CD4-positive, alpha-beta memory T cell (primary cell): ENCODE measurements at regions of chr1 and their contacts with region 1.

Region 1: GRCh38 chr1:23108918-23109533 is 59.6 kb downstream of the LUZP1 start:
- DNase-seq: peak in 1 of 5 donors; percentile 66
- H3K4me3 ChIP-seq: no peak overlapping the region
- H3K4me3 Mint-ChIP-seq: peak overlapping the region in 5 of 8 donors; percentile 2 to 74 (median 31)
- H3K27ac ChIP-seq: no peak overlapping the region
- H3K27ac Mint-ChIP-seq: peak overlapping the region in 6 of 7 donors; percentile 6 to 88 (median 62)
- H3K4me1 ChIP-seq: peaks cover 55% of the 10 kb centered on the region
- H3K4me1 Mint-ChIP-seq: peaks cover 38 to 73% (median 45%) of the 10 kb centered on the region in 4 donors
- H3K27me3 ChIP-seq: no peaks in the 10 kb centered on the region
- H3K27me3 Mint-ChIP-seq: no peaks in the 10 kb centered on the region

Region 2: DNA sequence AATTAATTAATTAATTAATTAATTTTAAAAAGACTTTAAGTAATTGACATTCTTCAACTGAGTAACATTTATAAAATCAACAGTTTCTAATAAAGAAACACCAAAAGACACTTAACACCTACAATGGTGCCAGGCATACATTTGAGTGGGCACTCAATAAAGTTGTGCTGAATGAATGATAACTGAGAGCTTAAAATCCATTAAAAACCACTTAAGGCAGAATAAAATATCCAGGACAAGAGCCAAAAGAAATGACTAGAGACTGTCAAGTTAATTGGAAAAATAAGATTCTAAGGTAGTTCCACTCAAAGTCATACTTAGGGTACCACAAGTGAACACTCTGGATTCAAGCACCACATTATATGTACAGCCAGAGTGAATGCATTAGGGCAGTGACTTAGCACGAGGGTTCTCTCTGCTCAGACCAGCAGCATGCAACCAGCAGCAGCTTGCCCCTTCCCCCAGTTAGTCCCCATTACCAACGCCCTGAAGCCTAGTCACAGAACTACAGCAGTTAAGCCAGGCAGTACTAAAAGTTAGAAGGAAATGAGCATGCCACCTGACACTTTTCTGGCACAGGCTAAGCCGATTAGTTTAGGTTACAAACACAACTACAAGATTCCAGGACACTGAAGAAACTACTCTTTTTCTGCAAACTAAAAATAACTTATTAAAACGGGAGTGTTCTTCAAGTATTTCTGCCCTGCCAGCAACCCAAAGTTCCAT is 13.2 kb after region 1 on chr1:
- CTCF ChIA-PET with region 1: interaction called, 15 read pairs
- POLR2A ChIA-PET with region 1: interaction called, 49 read pairs
- intact Hi-C with region 1: no loop called
- DNase-seq: no peak
- H3K4me3 ChIP-seq: no peak overlapping the region
- H3K4me3 Mint-ChIP-seq: no peak overlapping the region
- H3K27ac ChIP-seq: no peak overlapping the region
- H3K27ac Mint-ChIP-seq: peak overlapping the region in 4 of 7 donors; percentile 2 to 67 (median 33)
- H3K4me1 ChIP-seq: peaks cover 59% of the 10 kb centered on the region
- H3K4me1 Mint-ChIP-seq: peaks cover 43 to 87% (median 63%) of the 10 kb centered on the region in 4 donors
- H3K27me3 ChIP-seq: no peaks in the 10 kb centered on the region
- H3K27me3 Mint-ChIP-seq: no peaks in the 10 kb centered on the region